MCF 10A (cell line): ENCODE measurements at regions of chr2 and their contacts with region 1.

Region 1: DNA sequence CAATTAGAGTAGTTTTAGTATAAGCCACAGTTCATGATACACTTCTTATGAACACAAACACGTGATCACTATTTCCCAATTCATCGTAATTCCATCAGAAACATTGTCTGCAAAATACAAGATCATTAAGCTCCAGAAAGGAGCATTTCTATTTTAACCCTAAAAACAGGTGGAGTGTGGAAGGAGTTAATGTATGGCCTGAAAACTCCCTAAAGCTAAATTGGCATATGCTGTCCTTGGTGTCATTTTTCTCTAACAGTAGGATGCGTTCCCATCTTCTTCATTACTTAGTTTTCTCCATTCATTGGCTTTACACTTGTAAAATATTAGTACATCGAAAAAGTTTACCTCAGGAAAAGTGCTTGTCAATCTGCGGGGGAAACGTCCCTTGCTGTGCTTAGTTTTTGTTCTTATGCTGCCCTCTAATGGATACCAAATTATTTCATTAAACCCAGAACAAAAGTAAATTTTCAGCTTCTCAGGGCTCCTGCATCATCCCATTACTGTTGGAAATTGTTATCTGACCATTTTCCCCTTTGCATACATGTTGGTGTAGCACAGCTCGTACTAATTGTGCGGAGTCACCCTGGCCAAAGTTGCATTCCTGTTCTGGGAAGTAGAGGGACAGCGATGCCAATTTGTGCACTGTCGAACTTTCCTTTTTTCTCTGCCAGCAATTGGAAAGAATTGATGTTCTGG is 153.4 kb downstream of the GPD2 start:
- DNase-seq: peak; percentile 51
- H3K4me3 Mint-ChIP-seq: no peak overlapping the region
- H3K27ac Mint-ChIP-seq: no peak overlapping the region
- H3K4me1 Mint-ChIP-seq: no peaks in the 10 kb centered on the region
- H3K27me3 Mint-ChIP-seq: no peaks in the 10 kb centered on the region
- CTCF ChIP-seq: peak; percentile 60

Region 2: GRCh38 chr2:156065905-156066304 is 523.6 kb before region 1 on chr2:
- CTCF ChIA-PET with region 1: interaction called, 3 read pairs
- POLR2A ChIA-PET with region 1: no interaction called
- intact Hi-C with region 1: loop called (anchors 10 kb)
- DNase-seq: peak; percentile 53
- H3K4me3 Mint-ChIP-seq: no peak overlapping the region
- H3K27ac Mint-ChIP-seq: no peak overlapping the region
- H3K4me1 Mint-ChIP-seq: peaks cover 9% of the 10 kb centered on the region
- H3K27me3 Mint-ChIP-seq: no peaks in the 10 kb centered on the region
- CTCF ChIP-seq: peak; percentile 26

Region 3: GRCh38 chr2:156400706-156401678 is 188.5 kb before region 1 on chr2:
- CTCF ChIA-PET with region 1: interaction called, 9 read pairs
- POLR2A ChIA-PET with region 1: interaction called, 14 read pairs
- intact Hi-C with region 1: loop called (anchors 2 kb)
- DNase-seq: peak; percentile 78
- H3K4me3 Mint-ChIP-seq: peak overlapping the region; percentile 78
- H3K27ac Mint-ChIP-seq: peak overlapping the region; percentile 96
- H3K4me1 Mint-ChIP-seq: peaks cover 26% of the 10 kb centered on the region
- H3K27me3 Mint-ChIP-seq: no peaks in the 10 kb centered on the region
- CTCF ChIP-seq: no peak

Region 4: DNA sequence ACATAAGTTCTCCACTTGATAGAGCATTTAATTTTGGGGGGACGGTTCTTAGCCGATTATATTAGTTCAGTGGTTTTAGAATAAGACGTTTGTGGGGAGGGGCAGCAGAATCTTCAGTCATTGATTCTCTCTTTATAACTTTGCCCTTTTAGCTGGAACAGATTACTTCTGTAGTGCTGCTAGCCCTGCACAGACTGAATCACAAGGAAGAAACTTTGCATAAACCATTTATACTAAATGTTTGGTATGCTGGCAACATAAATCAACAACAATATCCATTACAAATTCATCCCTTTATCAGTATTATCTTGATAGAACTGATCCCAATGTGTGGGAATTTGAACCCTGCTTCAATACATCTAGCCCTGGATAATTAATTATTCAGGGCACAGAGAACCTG is 41.1 kb before region 1 on chr2:
- CTCF ChIA-PET with region 1: no interaction called
- POLR2A ChIA-PET with region 1: no interaction called
- intact Hi-C with region 1: no loop called
- DNase-seq: no peak
- H3K4me3 Mint-ChIP-seq: no peak overlapping the region
- H3K27ac Mint-ChIP-seq: no peak overlapping the region
- H3K4me1 Mint-ChIP-seq: no peaks in the 10 kb centered on the region
- H3K27me3 Mint-ChIP-seq: no peaks in the 10 kb centered on the region
- CTCF ChIP-seq: no peak

Region 5: GRCh38 chr2:156864325-156864724 is 274.8 kb after region 1 on chr2:
- CTCF ChIA-PET with region 1: no interaction called
- POLR2A ChIA-PET with region 1: no interaction called
- intact Hi-C with region 1: no loop called
- DNase-seq: no peak
- H3K4me3 Mint-ChIP-seq: no peak overlapping the region
- H3K27ac Mint-ChIP-seq: no peak overlapping the region
- H3K4me1 Mint-ChIP-seq: peaks cover 6% of the 10 kb centered on the region
- H3K27me3 Mint-ChIP-seq: no peaks in the 10 kb centered on the region
- CTCF ChIP-seq: no peak

Region 6: GRCh38 chr2:156883812-156884211 is 294.3 kb after region 1 on chr2:
- CTCF ChIA-PET with region 1: interaction called, 13 read pairs
- POLR2A ChIA-PET with region 1: interaction called, 3 read pairs
- intact Hi-C with region 1: no loop called
- DNase-seq: peak; percentile 91
- H3K4me3 Mint-ChIP-seq: no peak overlapping the region
- H3K27ac Mint-ChIP-seq: peak overlapping the region; percentile 21
- H3K4me1 Mint-ChIP-seq: peaks cover 6% of the 10 kb centered on the region
- H3K27me3 Mint-ChIP-seq: no peaks in the 10 kb centered on the region
- CTCF ChIP-seq: no peak

Region 7: GRCh38 chr2:157055660-157056199 is 466.2 kb after region 1 on chr2:
- CTCF ChIA-PET with region 1: interaction called, 3 read pairs
- POLR2A ChIA-PET with region 1: no interaction called
- intact Hi-C with region 1: loop called (anchors 5 kb)
- DNase-seq: peak; percentile 40
- H3K4me3 Mint-ChIP-seq: peak overlapping the region; percentile 41
- H3K27ac Mint-ChIP-seq: peak overlapping the region; percentile 80
- H3K4me1 Mint-ChIP-seq: peaks cover 19% of the 10 kb centered on the region
- H3K27me3 Mint-ChIP-seq: no peaks in the 10 kb centered on the region
- CTCF ChIP-seq: peak; percentile 41

Region 8: DNA sequence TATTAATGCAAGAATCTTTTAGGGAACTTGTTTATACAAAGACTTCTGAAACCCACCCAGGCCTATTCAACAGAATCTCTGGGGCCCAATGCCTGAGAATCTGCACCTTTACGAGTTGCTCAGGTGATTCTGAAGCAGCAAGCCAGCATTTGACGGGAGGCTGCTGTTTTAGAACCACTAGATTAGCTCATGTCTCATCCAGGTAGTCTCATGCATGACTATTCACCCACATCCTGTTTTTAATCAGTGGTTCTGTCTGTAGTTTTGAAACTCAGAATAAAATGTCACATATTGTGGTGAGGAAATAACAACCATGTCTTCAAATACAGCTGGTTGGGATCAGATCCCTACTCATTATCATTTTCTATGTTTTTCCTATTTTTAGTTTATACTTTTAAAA is 814.8 kb after region 1 on chr2:
- CTCF ChIA-PET with region 1: no interaction called
- POLR2A ChIA-PET with region 1: no interaction called
- intact Hi-C with region 1: no loop called
- DNase-seq: no peak
- H3K4me3 Mint-ChIP-seq: no peak overlapping the region
- H3K27ac Mint-ChIP-seq: no peak overlapping the region
- H3K4me1 Mint-ChIP-seq: no peaks in the 10 kb centered on the region
- H3K27me3 Mint-ChIP-seq: no peaks in the 10 kb centered on the region
- CTCF ChIP-seq: no peak